Panc1 (cell line): ENCODE measurements at regions of chr1 and their contacts with region 1.

Region 1: DNA sequence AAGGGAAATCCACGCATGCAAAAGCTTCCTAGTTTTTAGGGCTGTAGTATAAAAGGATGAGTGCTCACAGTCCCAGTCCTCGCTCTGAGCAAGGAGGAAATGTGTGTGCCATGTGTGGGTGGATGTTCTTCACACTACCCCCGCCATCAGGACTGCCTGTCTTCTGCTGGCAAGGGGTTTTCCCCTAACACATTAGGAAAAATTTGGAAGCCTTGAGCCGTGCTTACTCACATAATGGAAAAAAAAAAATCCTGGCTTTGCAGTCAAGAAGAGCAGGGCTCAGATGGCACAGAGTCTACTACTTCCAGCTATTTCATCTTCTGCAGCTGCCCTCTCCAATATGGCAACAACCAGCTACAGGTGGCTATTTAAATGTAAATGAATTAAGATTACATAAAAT is 363.1 kb downstream of the PLPP3 start:
- DNase-seq: no peak
- ATAC-seq: no peak
- H3K4me3 ChIP-seq: no peak overlapping the region
- H3K27ac ChIP-seq: no peak overlapping the region
- H3K4me1 ChIP-seq: no peaks in the 10 kb centered on the region
- H3K27me3 ChIP-seq: no peaks in the 10 kb centered on the region
- CTCF ChIP-seq: no peak

Region 2: GRCh38 chr1:56227886-56228285 is 11.7 kb after region 1 on chr1:
- CTCF ChIA-PET with region 1: no interaction called
- POLR2A ChIA-PET with region 1: no interaction called
- in situ Hi-C with region 1: no loop called
- intact Hi-C with region 1: loop called (anchors 1 kb)
- DNase-seq: no peak
- ATAC-seq: no peak
- H3K4me3 ChIP-seq: no peak overlapping the region
- H3K27ac ChIP-seq: no peak overlapping the region
- H3K4me1 ChIP-seq: no peaks in the 10 kb centered on the region
- H3K27me3 ChIP-seq: no peaks in the 10 kb centered on the region
- CTCF ChIP-seq: no peak

Region 3: DNA sequence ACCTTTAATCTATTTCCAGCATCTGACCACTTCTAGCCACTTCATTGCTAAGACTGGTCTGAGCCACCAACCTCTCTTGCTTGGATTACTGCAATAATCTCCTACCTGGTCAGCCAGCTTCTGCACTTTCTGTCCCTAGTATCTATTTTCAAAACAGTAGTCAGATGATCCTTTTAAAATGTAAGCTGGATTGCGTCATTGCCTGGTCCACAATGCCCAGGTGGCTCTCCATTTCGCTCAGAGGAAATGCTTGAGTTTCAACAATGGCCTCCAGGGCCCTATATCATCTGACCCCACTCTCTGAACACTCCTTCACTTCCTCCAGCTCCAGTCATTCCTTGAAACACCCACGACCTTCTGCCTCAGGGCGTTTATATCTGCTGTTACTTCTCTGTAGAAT is 600.7 kb after region 1 on chr1:
- CTCF ChIA-PET with region 1: no interaction called
- POLR2A ChIA-PET with region 1: interaction called, 15 read pairs
- in situ Hi-C with region 1: no loop called
- intact Hi-C with region 1: no loop called
- DNase-seq: no peak
- ATAC-seq: no peak
- H3K4me3 ChIP-seq: no peak overlapping the region
- H3K27ac ChIP-seq: no peak overlapping the region
- H3K4me1 ChIP-seq: peaks cover 4% of the 10 kb centered on the region; the same call in 1 of the 2 replicates
- H3K27me3 ChIP-seq: peaks cover 8% of the 10 kb centered on the region
- CTCF ChIP-seq: no peak